ENCODE measurements at regions of chr17 and their contacts with region 1.

Region 1: DNA sequence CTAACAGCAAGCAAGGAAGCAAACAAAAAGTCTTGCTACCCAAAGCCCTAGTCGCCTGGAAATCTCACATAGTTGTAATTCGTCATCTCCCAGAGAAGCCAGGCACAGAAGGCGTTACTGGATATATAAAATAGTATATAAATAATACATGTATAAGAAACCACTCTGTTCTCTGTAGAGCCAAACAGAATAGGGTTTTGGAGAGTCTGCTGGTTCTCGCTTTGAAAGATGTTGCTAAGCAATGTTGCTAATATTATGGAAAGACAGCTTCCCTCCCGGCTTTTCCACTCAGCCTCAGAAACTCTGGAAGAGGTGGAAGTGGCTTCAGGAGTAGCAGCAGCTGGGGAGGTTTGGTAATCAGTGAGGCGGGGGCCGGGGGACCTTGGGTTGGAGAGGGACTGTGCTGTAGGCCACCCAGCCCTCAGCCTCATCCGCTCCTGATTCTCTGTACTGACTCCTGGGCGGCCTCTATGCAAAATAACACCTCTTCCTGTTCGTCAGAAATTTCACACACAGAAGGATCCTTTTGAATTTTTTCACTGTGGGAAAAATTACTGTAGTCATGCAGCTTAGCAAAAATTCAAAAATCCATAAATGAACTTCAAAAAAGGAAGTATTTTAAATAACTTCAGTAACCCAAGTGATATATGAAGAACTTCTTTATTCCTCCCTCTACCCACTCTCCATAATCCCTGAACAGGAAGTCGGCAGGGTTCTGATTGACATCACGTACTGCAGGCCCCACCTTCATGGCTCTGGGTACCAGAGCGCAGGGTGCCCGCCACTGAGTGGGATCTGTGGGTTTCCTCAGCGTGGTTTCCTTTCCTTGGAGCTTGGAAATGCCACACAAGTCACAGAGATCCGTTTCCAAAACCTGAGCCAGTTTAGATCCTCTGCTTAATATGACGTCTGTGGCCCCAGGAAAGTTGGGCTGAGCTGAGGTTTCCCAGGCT is 51.4 kb downstream of the RAP1GAP2 start:
- DNase-seq: no peak
- CTCF ChIP-seq: no peak

Region 2: GRCh38 chr17:2776589-2777241 is 70.9 kb before region 1 on chr17:
- CTCF ChIA-PET with region 1: no interaction called
- POLR2A ChIA-PET with region 1: interaction called, 10 read pairs
- DNase-seq: no peak
- CTCF ChIP-seq: no peak

Region 3: DNA sequence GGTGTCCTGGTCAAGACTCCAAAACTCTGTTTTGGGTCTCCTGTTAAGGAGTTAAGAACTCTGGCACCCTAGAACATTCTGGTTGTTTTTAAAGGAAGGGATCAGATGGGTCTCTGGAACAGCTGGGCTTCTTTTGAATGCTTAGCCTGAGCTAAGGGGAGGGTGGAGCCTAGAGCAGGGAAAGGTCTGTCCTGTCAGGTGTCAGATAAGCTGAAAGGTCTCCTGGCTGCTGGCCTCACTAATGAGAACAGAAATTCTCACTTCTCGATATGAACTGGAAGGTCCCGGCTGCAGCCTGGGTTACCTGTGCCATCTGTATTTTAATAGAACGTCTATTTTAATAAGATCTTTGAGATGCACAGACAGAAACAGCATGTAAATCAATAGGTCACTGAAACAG is 17.6 kb after region 1 on chr17:
- CTCF ChIA-PET with region 1: interaction called, 11 read pairs
- POLR2A ChIA-PET with region 1: no interaction called
- DNase-seq: no peak
- CTCF ChIP-seq: no peak

Region 4: DNA sequence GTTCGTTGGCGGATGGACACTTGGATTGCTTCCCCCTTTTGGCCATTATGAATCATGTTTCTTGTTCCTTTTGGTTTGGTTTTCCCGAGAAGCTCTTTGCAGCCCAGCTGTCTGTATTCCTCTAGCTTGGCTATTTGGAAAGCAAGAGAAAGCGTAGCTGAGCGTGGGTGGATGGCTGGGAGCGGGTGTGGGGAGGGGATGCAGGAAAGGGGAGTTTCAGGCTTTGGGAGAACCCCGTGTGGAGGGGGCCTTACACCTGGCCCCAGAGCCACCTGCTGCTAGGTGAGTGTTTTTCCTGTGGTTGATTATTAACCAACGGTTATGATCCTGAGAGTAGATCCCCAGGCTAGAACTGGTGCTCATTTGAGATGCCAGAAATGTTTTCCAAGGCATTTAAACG is 52.2 kb after region 1 on chr17:
- CTCF ChIA-PET with region 1: no interaction called
- POLR2A ChIA-PET with region 1: no interaction called
- DNase-seq: no peak
- CTCF ChIP-seq: no peak

Region 5: GRCh38 chr17:3012926-3013581 is 165.4 kb after region 1 on chr17:
- CTCF ChIA-PET with region 1: interaction called, 54 read pairs
- POLR2A ChIA-PET with region 1: no interaction called
- DNase-seq: peak; percentile 83
- CTCF ChIP-seq: peak; percentile 90